IMR-90 (cell line): ENCODE measurements at regions of chr2 and their contacts with region 1.

Region 1: DNA sequence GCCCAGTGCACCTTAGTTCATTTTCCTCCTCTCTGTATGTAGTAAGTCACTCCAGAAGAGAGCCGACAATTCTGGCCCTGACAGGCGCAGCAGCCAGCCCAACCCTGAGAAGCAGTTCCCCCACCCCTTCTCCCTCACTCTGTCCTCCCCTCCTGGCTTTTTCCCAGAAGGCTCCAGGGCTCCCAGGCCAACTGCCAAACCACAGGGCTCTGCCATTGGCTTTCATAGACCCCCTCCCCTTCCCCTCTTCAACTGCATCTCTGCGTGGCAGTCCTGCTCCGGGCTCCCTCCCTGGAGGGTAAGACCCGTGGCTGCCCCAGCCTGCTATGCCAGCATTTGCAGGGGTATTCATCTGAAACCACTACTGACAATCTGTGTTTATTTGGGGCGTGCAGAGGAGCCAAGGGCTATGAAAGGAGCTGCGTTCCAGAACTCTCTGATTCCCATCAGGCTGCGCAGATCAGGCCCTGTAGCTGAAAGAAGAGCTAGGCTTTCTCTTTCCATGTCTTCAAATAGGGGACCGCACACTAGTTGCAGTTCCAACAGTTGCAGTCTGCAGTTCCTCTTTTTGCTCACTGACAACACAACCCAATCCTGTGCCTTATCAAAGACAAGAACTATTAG is 388.6 kb upstream of the TNP1 start:
- DNase-seq: peak; percentile 74
- ATAC-seq: peak; percentile 78
- H3K4me3 ChIP-seq: no peak overlapping the region
- H3K27ac ChIP-seq: peak overlapping the region; percentile 73
- H3K4me1 ChIP-seq: peaks cover 34% of the 10 kb centered on the region
- H3K27me3 ChIP-seq: no peaks in the 10 kb centered on the region
- CTCF ChIP-seq: no peak
- POLR2A ChIP-seq: no peak
- RAD21 ChIP-seq: no peak

Region 2: DNA sequence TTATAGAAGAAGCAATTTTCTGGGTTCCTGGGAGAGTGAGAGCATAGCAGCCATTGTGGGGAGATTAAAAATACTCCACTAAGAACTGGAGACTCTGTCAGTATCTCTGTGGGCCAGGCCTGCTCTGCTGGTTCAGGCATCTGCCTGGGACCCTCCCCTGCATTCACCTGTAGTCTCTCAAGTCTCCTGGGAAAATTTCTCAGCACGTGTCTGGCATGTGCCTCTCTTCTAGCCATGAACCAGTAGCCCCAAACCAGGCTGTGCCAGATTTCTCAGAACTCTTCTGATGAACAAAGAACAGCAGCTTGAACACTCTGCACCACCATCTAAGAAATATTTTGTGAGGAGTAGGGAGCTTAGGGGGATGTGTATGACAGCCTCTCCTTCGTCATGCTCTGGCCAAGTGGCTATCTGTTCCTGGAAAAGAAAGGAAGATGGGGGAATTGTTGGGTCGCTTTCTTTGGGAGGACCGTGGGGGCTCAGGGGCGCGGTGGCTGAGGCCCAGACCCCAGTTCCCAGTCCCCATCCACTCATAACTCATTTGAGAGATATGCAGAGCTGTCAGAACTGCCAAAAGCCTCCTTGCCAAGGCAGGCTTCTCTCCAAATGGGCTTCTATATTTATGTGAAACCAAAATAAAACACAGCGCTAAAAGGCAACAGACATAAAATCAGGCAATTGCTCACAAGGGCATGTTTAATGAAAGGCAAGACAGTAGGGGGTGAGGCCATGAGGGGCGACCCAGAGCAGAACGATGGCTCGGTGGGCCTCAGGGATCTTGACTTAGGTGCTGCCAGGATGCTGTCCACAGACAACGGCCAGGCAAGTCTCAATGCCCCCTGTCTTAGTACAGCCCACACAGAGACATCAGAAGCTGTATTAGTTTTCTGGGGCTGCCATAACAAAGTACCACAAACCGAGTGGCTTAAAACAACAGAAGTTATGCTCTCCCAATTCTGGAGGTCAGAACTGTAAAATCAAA is 273.8 kb before region 1 on chr2:
- CTCF ChIA-PET with region 1: no interaction called
- POLR2A ChIA-PET with region 1: interaction called, 16 read pairs
- dilution Hi-C with region 1: no loop called
- in situ Hi-C with region 1: no loop called
- intact Hi-C with region 1: no loop called
- DNase-seq: no peak
- ATAC-seq: no peak
- H3K4me3 ChIP-seq: no peak overlapping the region
- H3K27ac ChIP-seq: peak overlapping the region; percentile 10; the same call in 1 of the 2 replicates
- H3K4me1 ChIP-seq: peaks cover 2% of the 10 kb centered on the region; the same call in 1 of the 2 replicates
- H3K27me3 ChIP-seq: no peaks in the 10 kb centered on the region; the same call in 1 of the 2 replicates
- CTCF ChIP-seq: no peak
- POLR2A ChIP-seq: no peak
- RAD21 ChIP-seq: no peak

Region 3: GRCh38 chr2:217223222-217223930 is 25.0 kb before region 1 on chr2:
- CTCF ChIA-PET with region 1: no interaction called
- POLR2A ChIA-PET with region 1: no interaction called
- dilution Hi-C with region 1: no loop called
- in situ Hi-C with region 1: no loop called
- intact Hi-C with region 1: no loop called
- DNase-seq: peak; percentile 99
- ATAC-seq: peak; percentile 85
- H3K4me3 ChIP-seq: no peak overlapping the region
- H3K27ac ChIP-seq: peak overlapping the region; percentile 99
- H3K4me1 ChIP-seq: peaks cover 35% of the 10 kb centered on the region
- H3K27me3 ChIP-seq: no peaks in the 10 kb centered on the region
- CTCF ChIP-seq: no peak
- POLR2A ChIP-seq: no peak
- RAD21 ChIP-seq: peak; percentile 28

Region 4: GRCh38 chr2:217269701-217270484 is 21.5 kb after region 1 on chr2:
- CTCF ChIA-PET with region 1: no interaction called
- POLR2A ChIA-PET with region 1: no interaction called
- dilution Hi-C with region 1: no loop called
- in situ Hi-C with region 1: no loop called
- intact Hi-C with region 1: no loop called
- DNase-seq: no peak
- ATAC-seq: no peak
- H3K4me3 ChIP-seq: no peak overlapping the region
- H3K27ac ChIP-seq: 0 out of 2 replicates have a peak overlapping the region, but pooled peaks have one; percentile 3
- H3K4me1 ChIP-seq: peaks cover 8% of the 10 kb centered on the region; the same call in 1 of the 2 replicates
- H3K27me3 ChIP-seq: no peaks in the 10 kb centered on the region
- CTCF ChIP-seq: no peak
- POLR2A ChIP-seq: no peak
- RAD21 ChIP-seq: no peak

Region 5: DNA sequence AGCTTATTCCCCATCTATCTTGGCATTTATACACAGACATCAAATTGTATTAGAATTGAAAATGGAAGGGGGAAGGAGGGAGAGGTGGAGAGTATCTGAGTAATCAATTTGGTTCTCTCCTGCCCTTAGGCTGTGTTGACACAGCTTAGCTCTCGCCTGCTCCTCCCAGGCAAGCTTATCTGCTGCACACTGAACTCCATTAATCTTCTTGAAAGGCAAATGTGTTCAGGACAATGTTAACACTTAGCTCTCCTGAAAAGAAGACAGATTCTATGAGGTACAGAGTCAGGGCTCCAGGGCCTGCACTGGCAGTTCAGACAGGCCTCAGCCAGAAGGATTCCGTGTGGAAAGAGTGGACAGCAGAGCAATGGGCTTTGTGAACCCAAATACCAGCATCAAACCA is 41.5 kb after region 1 on chr2:
- CTCF ChIA-PET with region 1: no interaction called
- POLR2A ChIA-PET with region 1: no interaction called
- dilution Hi-C with region 1: no loop called
- in situ Hi-C with region 1: no loop called
- intact Hi-C with region 1: no loop called
- DNase-seq: peak; percentile 69
- ATAC-seq: peak; percentile 31
- H3K4me3 ChIP-seq: no peak overlapping the region
- H3K27ac ChIP-seq: peak overlapping the region; percentile 69
- H3K4me1 ChIP-seq: peaks cover 30% of the 10 kb centered on the region
- H3K27me3 ChIP-seq: no peaks in the 10 kb centered on the region
- CTCF ChIP-seq: no peak
- POLR2A ChIP-seq: no peak
- RAD21 ChIP-seq: no peak